H1 (cell line): ENCODE measurements at regions of chr20 and their contacts with region 1.

Region 1: DNA sequence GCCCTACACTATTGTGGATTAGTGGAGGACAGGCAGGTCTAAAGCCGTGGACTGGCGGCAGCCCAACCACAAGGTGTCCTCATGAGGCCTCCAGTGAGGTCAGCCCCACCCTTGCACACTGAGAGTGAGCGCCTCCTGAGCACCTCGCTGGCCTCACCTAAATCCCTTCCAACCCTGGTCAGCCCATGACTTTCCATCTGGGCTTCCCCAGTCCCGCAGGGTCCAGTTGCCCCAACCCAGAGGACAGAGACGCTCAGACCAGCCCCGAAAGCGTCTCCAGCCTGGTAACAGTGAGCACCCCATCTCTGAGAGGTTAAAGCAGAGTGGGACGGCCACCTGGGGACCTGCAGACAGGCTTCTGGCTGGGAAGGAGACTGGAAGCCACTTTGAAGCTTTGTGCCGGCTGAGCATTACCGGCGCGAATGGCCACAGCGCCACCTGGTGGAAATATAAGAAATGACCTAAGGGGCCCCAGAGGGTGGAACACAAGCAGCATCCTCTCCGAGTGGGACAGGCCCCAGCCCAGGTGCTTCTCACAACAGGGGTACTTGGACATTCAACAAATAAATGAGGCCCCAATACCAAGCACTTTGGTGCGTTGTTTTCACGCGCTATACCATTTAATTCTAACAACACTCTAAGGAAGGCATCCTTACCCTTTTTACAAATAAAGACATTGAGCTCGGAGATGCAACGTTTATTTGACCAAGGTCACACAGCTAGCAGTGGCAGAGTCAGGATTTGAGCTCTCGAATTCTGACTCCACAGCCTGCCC is 65.7 kb upstream of the TOP1 start:
- DNase-seq: peak; percentile 33 to 91
- H3K4me3 ChIP-seq: no peak overlapping the region
- H3K27ac ChIP-seq: no peak overlapping the region
- H3K4me1 ChIP-seq: no peaks in the 10 kb centered on the region; a peak in 1 of 7 replicates
- H3K27me3 ChIP-seq: no peaks in the 10 kb centered on the region
- CTCF ChIP-seq: peak; percentile 77 to 86 (median 78)
- EP300 ChIP-seq: no peak
- POLR2A ChIP-seq: no peak
- RAD21 ChIP-seq: peak; percentile 92 to 96

Region 2: GRCh38 chr20:40529226-40529625 is 433.7 kb before region 1 on chr20:
- CTCF ChIA-PET with region 1: no interaction called
- POLR2A ChIA-PET with region 1: no interaction called
- DNase-seq: no peak
- H3K4me3 ChIP-seq: no peak overlapping the region
- H3K27ac ChIP-seq: no peak overlapping the region
- H3K4me1 ChIP-seq: no peaks in the 10 kb centered on the region
- H3K27me3 ChIP-seq: no peaks in the 10 kb centered on the region; a peak in 1 of 7 replicates
- CTCF ChIP-seq: no peak
- EP300 ChIP-seq: no peak
- POLR2A ChIP-seq: no peak
- RAD21 ChIP-seq: no peak

Region 3: GRCh38 chr20:40938020-40938419 is 24.9 kb before region 1 on chr20:
- CTCF ChIA-PET with region 1: interaction called, 10 read pairs
- POLR2A ChIA-PET with region 1: no interaction called
- DNase-seq: peak in 1 of 2 experiments; percentile 68
- H3K4me3 ChIP-seq: no peak overlapping the region
- H3K27ac ChIP-seq: no peak overlapping the region
- H3K4me1 ChIP-seq: no peaks in the 10 kb centered on the region
- H3K27me3 ChIP-seq: no peaks in the 10 kb centered on the region
- CTCF ChIP-seq: peak; percentile 53 to 68 (median 59)
- EP300 ChIP-seq: no peak
- POLR2A ChIP-seq: no peak
- RAD21 ChIP-seq: peak; percentile 50 to 65; a peak in 3 of 4 replicates

Region 4: DNA sequence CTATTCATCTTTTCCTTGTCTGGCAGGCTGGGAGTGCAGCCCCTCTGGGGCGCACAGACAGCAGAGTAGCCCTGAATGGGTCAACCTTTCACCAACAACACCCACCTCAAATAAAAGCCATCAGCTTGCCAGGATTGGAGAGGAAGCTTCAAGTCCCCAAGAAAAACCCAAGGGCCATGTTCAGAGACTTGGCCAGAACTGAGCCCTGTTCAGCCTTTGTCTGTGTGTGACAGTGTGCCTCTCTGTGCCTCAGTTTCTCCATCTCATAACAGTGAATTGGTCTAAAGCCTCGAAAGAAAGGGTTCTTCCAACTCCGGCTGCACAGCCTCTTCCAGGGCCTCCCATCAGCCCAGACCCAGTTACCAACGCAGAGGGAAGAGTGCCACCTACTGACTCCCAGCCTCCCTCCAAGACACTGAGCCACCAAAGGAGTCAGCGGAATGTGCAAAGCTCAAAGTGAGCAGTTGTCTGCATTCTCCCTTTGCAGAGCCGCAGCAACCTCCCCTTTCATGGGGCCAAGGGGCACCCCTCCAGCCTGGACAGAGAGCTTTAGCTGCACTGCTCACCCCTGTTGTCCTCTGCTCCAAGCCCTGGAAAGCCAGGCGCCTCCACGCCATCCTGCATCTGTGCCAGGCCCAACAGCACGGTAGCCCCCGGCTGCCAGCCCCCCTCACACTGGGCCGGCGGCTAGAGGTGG is 17.0 kb before region 1 on chr20:
- CTCF ChIA-PET with region 1: interaction called, 34 read pairs
- POLR2A ChIA-PET with region 1: no interaction called
- DNase-seq: peak; percentile 36 to 76
- H3K4me3 ChIP-seq: no peak overlapping the region
- H3K27ac ChIP-seq: no peak overlapping the region
- H3K4me1 ChIP-seq: peaks cover 0 to 3% (median 2%) of the 10 kb centered on the region in 4 experiments; a peak in 3 of 7 replicates
- H3K27me3 ChIP-seq: no peaks in the 10 kb centered on the region; a peak in 2 of 7 replicates
- CTCF ChIP-seq: peak; percentile 86 to 98 (median 90)
- EP300 ChIP-seq: no peak
- POLR2A ChIP-seq: no peak
- RAD21 ChIP-seq: peak; percentile 96 to 97

Region 5: DNA sequence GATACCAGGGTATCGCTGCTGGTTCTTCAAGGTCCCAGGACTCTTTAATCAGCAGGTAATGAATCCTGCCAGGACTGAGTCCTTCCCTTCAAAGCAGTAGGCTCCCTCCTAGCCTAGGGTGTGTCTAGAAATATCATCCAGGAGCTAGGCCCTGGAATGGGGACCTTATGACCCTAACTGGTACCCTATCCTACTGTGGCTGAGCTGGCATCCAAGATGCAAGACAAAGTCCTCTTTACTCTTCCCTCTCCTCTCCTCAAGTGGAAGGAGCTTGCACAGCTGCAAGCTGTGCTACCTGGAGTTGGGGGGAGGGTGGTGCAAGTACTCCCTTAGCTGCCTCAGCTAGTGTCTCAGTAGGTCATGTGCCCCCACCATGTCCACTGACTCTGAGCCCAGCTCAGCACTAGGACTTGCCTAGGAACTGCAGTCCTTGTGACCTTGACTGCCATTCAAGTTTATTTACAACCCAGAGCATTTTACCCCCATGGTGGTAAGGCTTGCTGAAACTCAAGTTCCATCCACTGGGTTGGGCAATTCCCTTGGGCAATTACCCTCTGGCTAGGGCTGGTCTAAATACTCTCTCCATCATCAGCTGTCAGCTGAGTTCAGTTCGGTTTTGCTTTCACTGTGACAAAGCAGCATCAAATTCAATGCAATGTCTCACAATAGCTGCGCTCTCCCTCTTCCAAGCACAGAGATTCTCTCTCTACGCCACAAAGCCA is 17.4 kb after region 1 on chr20:
- CTCF ChIA-PET with region 1: interaction called, 31 read pairs
- POLR2A ChIA-PET with region 1: no interaction called
- DNase-seq: peak in 1 of 2 experiments; percentile 16
- H3K4me3 ChIP-seq: no peak overlapping the region
- H3K27ac ChIP-seq: no peak overlapping the region
- H3K4me1 ChIP-seq: no peaks in the 10 kb centered on the region; a peak in 1 of 7 replicates
- H3K27me3 ChIP-seq: no peaks in the 10 kb centered on the region
- CTCF ChIP-seq: no peak
- EP300 ChIP-seq: no peak
- POLR2A ChIP-seq: no peak
- RAD21 ChIP-seq: no peak

Region 6: GRCh38 chr20:41095110-41095969 is 132.4 kb after region 1 on chr20:
- CTCF ChIA-PET with region 1: interaction called, 99 read pairs
- POLR2A ChIA-PET with region 1: interaction called, 3 read pairs
- DNase-seq: no peak
- H3K4me3 ChIP-seq: no peak overlapping the region
- H3K27ac ChIP-seq: no peak overlapping the region
- H3K4me1 ChIP-seq: no peaks in the 10 kb centered on the region
- H3K27me3 ChIP-seq: no peaks in the 10 kb centered on the region
- CTCF ChIP-seq: peak; percentile 56 to 82 (median 67)
- EP300 ChIP-seq: no peak
- POLR2A ChIP-seq: no peak
- RAD21 ChIP-seq: peak; percentile 72 to 74